Ovary (tissue), 10 donors: ENCODE measurements at regions of chr9 and their contacts with region 1.

Region 1: DNA sequence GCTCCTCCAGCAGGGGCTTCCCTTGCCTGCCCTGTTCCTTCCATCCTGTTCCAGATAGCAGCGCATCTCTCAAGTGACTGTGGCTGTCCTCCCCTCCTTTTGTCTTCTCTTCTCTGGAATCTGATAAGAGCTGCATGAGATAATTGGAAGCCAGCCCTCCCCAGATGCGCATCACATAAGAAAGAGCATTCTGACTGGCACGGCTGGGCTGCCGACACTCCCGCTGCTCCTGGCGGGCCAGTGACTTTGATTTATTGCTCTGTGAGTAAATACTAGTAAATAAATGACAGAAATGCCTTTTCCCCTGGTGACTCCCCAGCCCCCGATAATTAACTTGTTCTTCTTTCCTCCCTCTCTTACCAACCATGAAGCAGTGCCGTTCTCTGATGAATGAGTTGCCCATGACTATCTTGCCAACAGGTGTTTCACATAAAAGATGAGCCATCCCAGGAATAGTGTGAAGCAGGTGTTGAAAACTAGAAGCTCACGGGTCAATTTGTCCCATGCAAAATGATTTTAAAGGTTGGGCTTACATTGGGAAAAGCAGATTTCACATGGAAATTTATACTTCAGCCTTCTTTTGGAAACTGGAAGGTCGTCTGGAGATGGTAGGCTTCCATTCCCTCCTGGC is 212.3 kb downstream of the ERCC6L2 start:
- DNase-seq: no peak
- H3K4me3 ChIP-seq: no peak overlapping the region
- H3K27ac ChIP-seq: no peak overlapping the region
- H3K4me1 ChIP-seq: no peaks in the 10 kb centered on the region
- H3K27me3 ChIP-seq: no peaks in the 10 kb centered on the region
- CTCF ChIP-seq: no peak
- EP300 ChIP-seq: no peak
- POLR2A ChIP-seq: no peak

Region 2: DNA sequence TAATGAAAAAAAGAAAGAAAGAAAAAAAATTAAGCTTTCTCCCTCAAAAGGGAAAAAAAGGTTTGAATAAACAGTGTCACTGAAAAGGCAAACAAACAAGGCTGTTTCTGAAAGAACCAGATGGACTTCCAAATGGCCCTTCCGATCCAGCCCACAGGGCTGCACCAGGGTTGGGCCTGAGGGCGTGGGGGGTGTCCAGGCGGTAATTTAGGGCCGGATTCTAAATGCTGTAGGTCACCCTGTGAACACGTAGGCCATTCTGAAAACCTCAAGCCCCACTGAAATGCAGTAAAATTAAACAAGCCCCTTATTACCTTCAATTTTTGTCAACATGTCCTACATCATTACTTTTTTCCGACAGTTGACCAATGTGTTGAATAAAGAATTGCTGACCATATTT is 82.1 kb after region 1 on chr9:
- intact Hi-C with region 1: loop called in 1 of 4 experiments (anchors 5 kb)
- DNase-seq: no peak
- H3K4me3 ChIP-seq: no peak overlapping the region
- H3K27ac ChIP-seq: no peak overlapping the region
- H3K4me1 ChIP-seq: peaks cover 8% of the 10 kb centered on the region
- H3K27me3 ChIP-seq: no peaks in the 10 kb centered on the region
- CTCF ChIP-seq: no peak
- EP300 ChIP-seq: no peak
- POLR2A ChIP-seq: no peak